ENCODE measurements at regions of chr4 and their contacts with region 1.

Region 1: GRCh38 chr4:6794189-6794588 is 11.7 kb downstream of the KIAA0232 start:
- DNase-seq: no peak

Region 2: GRCh38 chr4:6825403-6825802 is 31.2 kb after region 1 on chr4:
- intact Hi-C with region 1: loop called (anchors 5 kb)
- DNase-seq: no peak

Region 3: GRCh38 chr4:6986781-6987587 is 192.8 kb after region 1 on chr4:
- intact Hi-C with region 1: no loop called
- DNase-seq: peak; percentile 99